MCF 10A (cell line): ENCODE measurements at regions of chr7 and their contacts with region 1.

Region 1: DNA sequence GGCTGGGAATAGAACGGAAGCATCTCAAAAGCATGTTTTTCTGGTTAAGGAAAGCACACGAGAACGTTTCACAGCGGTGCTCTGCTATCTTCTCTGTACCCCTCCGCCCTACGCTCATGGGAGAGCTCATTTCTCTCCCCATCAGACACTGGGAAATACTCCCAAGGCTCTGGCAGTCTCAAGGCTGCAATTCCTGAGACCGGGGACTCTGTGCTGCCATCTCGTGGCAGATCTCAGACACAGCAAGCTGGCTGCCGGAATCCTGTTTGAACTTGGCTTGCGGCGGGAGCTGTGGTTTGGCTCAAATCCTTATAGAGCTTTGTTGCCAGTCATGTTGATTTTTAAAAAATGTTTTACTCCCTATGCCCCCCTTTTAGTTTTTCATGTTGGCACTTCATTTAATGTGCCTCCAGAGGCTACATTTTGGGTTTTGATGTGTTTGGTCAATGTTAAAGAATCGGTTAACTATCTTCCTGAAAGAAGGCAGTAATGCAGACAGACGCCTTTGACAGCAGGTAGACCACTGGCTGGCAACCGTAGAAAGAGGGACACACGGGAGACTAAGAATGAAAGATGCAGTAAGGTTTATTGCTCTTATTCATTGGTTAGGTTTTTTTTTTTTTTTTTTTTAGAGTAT is 27.6 kb downstream of the BMPER start:
- DNase-seq: peak; percentile 84
- H3K4me3 Mint-ChIP-seq: no peak overlapping the region
- H3K27ac Mint-ChIP-seq: peak overlapping the region; percentile 19
- H3K4me1 Mint-ChIP-seq: peaks cover 19% of the 10 kb centered on the region
- H3K27me3 Mint-ChIP-seq: no peaks in the 10 kb centered on the region
- CTCF ChIP-seq: peak; percentile 88

Region 2: DNA sequence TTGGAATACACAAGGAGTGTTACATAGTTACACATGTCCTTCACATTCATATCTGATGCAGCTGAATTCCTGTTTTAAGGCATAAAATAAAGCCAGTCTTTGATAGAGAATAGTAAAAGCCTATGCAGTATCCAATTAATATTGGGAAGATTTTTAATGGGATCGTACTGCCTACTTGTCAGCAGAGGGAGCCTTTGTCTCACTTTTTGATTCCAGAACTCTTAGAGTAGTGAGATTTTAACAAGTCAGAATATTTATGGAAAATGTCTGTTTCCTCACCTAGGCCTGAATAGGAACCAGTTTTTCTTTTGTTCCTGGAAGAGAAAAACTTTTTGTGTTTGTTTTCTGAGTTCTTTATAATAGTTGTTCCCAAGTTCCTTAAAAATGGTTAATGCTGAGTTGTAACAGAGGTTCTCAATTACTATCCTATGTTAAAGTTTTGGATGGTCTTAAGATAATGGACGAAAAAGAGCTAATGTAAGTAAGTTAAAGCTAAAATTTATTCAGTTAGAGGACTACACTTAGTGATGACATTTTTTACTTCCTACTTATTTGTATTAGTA is 689.5 kb before region 1 on chr7:
- CTCF ChIA-PET with region 1: interaction called, 6 read pairs
- POLR2A ChIA-PET with region 1: no interaction called
- intact Hi-C with region 1: loop called (anchors 2 kb)
- DNase-seq: peak; percentile 57
- H3K4me3 Mint-ChIP-seq: no peak overlapping the region
- H3K27ac Mint-ChIP-seq: no peak overlapping the region
- H3K4me1 Mint-ChIP-seq: no peaks in the 10 kb centered on the region
- H3K27me3 Mint-ChIP-seq: no peaks in the 10 kb centered on the region
- CTCF ChIP-seq: peak; percentile 58

Region 3: DNA sequence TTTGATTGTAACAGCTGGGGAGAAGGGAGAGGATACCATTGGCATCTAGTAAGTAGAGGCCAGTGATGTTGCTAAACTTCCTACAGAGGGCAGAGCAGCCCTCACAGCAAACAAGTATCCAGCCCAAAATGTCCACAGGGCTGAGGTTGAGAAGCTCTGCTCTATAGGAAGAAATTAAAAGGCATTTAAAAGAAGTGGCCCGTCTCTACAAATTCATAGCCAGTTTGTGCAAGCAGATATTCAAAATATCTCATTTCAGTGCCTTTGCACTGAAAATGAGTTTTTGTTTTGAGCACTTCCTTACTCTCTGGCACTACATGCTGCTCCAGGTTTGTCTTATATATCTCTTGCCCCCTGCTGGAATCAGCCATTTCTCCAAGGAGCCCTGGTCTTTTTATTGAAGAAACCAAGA is 473.6 kb before region 1 on chr7:
- CTCF ChIA-PET with region 1: interaction called, 4 read pairs
- POLR2A ChIA-PET with region 1: no interaction called
- intact Hi-C with region 1: loop called (anchors 2 kb)
- DNase-seq: peak; percentile 58
- H3K4me3 Mint-ChIP-seq: no peak overlapping the region
- H3K27ac Mint-ChIP-seq: no peak overlapping the region
- H3K4me1 Mint-ChIP-seq: no peaks in the 10 kb centered on the region
- H3K27me3 Mint-ChIP-seq: no peaks in the 10 kb centered on the region
- CTCF ChIP-seq: peak; percentile 26

Region 4: GRCh38 chr7:33764752-33765451 is 168.0 kb before region 1 on chr7:
- CTCF ChIA-PET with region 1: interaction called, 177 read pairs
- POLR2A ChIA-PET with region 1: no interaction called
- intact Hi-C with region 1: no loop called
- DNase-seq: no peak
- H3K4me3 Mint-ChIP-seq: no peak overlapping the region
- H3K27ac Mint-ChIP-seq: no peak overlapping the region
- H3K4me1 Mint-ChIP-seq: peaks cover 6% of the 10 kb centered on the region
- H3K27me3 Mint-ChIP-seq: no peaks in the 10 kb centered on the region
- CTCF ChIP-seq: no peak

Region 5: GRCh38 chr7:33832271-33832721 is 100.7 kb before region 1 on chr7:
- CTCF ChIA-PET with region 1: no interaction called
- POLR2A ChIA-PET with region 1: no interaction called
- intact Hi-C with region 1: no loop called
- DNase-seq: no peak
- H3K4me3 Mint-ChIP-seq: no peak overlapping the region
- H3K27ac Mint-ChIP-seq: no peak overlapping the region
- H3K4me1 Mint-ChIP-seq: peaks cover 26% of the 10 kb centered on the region
- H3K27me3 Mint-ChIP-seq: no peaks in the 10 kb centered on the region
- CTCF ChIP-seq: no peak

Region 6: DNA sequence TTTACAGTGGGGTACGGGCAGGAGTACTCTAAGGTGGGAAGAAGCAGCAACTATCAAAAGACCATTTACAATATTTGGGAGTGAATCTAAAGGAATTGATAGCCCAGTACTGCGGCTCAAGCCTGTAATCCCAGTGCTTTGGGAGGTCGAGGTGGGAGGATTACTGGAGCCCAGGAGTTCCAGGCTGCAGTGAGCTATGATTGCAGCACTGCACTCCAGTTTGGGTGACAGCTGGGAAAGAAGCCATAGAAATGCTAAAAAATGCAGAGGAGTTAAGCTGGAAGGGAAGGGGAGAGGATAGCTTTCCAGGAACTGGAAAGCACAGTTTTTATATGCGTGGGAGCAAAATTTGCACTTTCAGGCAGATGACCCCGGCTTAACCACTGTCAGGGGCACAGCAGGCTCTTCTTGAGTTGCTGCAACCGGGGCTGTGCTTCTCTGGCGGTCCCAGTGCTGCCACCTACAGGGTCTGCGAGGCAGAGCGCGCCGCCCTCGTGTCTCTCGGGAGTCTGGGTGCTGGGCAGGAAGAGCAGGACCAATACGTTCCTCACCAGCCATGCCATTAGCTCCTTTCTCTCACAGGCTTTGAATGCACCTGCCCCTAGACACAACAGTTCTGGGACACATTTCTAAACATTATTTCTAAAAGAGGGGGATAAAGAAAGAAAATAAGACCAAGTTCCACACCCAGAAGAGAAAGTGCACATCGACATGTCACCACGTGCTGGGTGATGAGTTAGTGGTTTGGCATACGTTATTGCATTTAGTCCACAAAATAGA is 37.7 kb before region 1 on chr7:
- CTCF ChIA-PET with region 1: interaction called, 21 read pairs
- POLR2A ChIA-PET with region 1: no interaction called
- intact Hi-C with region 1: no loop called
- DNase-seq: peak; percentile 77
- H3K4me3 Mint-ChIP-seq: no peak overlapping the region
- H3K27ac Mint-ChIP-seq: no peak overlapping the region
- H3K4me1 Mint-ChIP-seq: peaks cover 14% of the 10 kb centered on the region
- H3K27me3 Mint-ChIP-seq: peaks cover 11% of the 10 kb centered on the region
- CTCF ChIP-seq: peak; percentile 79

Region 7: GRCh38 chr7:33946094-33946700 is 13.2 kb after region 1 on chr7:
- CTCF ChIA-PET with region 1: interaction called, 30 read pairs
- POLR2A ChIA-PET with region 1: interaction called, 3 read pairs
- intact Hi-C with region 1: no loop called
- DNase-seq: peak; percentile 38
- H3K4me3 Mint-ChIP-seq: no peak overlapping the region
- H3K27ac Mint-ChIP-seq: no peak overlapping the region
- H3K4me1 Mint-ChIP-seq: no peaks in the 10 kb centered on the region
- H3K27me3 Mint-ChIP-seq: no peaks in the 10 kb centered on the region
- CTCF ChIP-seq: no peak

Region 8: DNA sequence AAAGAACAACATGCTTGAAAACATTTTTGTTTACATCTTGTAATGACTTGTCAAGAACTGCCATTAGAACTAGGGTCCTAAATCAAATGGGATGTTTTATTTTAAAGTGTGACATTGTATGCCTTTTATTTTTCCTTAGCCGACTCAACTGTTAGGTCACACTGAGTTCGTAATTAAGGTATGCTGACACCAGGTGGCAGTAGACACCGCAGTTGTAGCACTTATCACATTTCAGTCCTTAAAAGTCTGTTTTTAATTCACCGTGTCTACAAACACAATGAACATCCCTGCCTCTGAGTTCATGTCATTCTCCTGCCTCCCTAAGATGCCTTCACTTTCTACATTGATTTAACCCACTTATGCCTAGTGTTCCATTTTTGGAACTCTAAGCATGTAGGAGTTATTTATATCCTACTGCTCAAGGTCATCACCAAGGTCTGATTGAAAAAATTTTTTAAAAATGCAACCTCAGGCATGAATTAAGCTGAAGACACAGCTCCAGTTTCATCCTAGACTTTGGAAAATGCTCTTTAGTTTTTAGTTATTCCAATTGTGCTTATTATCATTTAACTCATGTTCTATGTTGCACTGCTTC is 158.5 kb after region 1 on chr7:
- CTCF ChIA-PET with region 1: no interaction called
- POLR2A ChIA-PET with region 1: no interaction called
- intact Hi-C with region 1: no loop called
- DNase-seq: peak; percentile 68
- H3K4me3 Mint-ChIP-seq: no peak overlapping the region
- H3K27ac Mint-ChIP-seq: no peak overlapping the region
- H3K4me1 Mint-ChIP-seq: peaks cover 11% of the 10 kb centered on the region
- H3K27me3 Mint-ChIP-seq: no peaks in the 10 kb centered on the region
- CTCF ChIP-seq: peak; percentile 61